IMR-90 (cell line): ENCODE measurements at regions of chr14 and their contacts with region 1.

Region 1: GRCh38 chr14:58994130-58994529 is 194.3 kb upstream of the DAAM1 start:
- DNase-seq: no peak
- ATAC-seq: no peak
- H3K4me3 ChIP-seq: no peak overlapping the region
- H3K27ac ChIP-seq: no peak overlapping the region
- H3K4me1 ChIP-seq: no peaks in the 10 kb centered on the region
- H3K27me3 ChIP-seq: peaks cover 4% of the 10 kb centered on the region
- CTCF ChIP-seq: no peak
- POLR2A ChIP-seq: no peak
- RAD21 ChIP-seq: no peak

Region 2: DNA sequence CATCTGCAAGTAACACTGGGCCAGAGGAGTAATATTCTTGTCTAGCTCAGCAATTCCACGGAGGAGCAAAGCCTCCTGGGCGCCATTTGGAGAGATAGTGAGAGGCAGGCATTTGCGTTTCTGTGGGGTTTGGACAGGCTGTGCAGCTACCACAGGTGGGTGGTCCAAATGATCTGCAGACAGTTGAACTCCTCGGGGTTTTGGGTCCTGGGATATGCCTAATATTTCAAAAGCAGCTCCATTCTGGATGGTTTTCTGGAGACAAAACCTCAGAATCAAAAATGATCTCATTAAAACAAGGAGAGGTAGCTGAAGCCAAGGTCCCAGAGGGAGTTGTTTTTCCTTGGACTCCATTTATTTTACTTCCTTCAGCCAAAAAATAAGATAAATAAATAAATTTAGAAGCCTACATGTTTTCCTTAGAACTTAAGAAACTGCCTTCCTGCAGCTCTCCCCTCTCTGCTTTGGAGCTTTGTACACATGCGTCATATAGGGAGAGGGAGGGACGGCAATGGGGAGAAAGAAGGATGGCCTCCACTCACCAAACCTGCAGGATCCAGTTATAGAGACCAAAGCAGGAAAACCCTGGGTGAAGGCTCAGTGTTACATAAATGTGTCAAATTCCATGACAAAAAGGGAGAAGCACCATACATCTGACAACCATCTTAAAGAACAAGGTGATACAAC is 32.9 kb before region 1 on chr14:
- CTCF ChIA-PET with region 1: no interaction called
- POLR2A ChIA-PET with region 1: interaction called, 15 read pairs
- dilution Hi-C with region 1: no loop called
- in situ Hi-C with region 1: no loop called
- intact Hi-C with region 1: no loop called
- DNase-seq: no peak
- ATAC-seq: no peak
- H3K4me3 ChIP-seq: no peak overlapping the region
- H3K27ac ChIP-seq: no peak overlapping the region
- H3K4me1 ChIP-seq: no peaks in the 10 kb centered on the region
- H3K27me3 ChIP-seq: no peaks in the 10 kb centered on the region; the same call in 1 of the 2 replicates
- CTCF ChIP-seq: no peak
- POLR2A ChIP-seq: no peak
- RAD21 ChIP-seq: no peak